ENCODE measurements at regions of chr3 and their contacts with region 1.

Region 1: DNA sequence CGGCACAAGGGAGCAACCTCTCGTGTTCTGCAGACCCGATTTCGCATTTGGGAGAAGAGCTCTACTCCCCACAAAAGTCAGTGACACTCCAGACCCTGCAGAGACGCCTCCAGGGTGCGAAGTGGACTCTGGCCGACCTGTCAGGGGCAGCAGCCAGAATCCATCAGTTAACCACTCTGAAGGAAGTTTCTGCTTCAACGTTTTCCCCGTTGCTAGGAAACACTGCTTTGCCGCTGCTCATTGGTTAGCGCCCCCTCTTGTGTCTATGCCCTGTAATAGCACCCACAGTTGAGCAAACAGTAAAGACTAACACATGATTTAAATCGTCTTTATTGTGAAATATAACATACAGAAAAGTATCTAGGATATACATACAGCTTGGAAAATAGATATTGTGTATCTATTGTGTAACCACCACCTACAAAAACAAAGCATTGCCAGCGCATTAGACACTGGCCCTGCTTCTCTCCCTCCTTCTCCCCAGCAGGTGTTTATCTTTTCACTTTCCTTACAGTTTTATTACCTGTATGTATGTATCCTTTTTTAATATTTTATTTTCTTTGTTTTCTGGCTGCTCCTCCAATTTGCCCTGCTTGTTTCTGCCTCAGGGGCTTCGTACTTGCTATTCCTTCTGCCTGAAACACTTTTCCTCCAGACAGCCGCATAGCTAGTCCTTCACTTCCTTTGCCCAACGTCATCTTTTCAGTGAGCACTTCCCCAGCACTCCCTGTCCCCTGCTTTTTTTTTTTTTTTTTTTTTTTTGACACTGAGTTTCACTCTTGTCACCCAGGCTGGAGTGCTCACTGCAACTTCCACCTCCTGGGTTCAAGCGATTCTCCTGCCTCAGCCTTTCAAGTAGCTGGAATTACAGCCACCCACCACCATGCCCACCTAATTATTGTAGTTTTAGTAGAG is 38.8 kb downstream of the TMEM40 start:
- H3K4me3 ChIP-seq: no peak overlapping the region
- H3K27ac ChIP-seq: no peak overlapping the region
- H3K4me1 ChIP-seq: no peaks in the 10 kb centered on the region
- CTCF ChIP-seq: peak; percentile 72

Region 2: DNA sequence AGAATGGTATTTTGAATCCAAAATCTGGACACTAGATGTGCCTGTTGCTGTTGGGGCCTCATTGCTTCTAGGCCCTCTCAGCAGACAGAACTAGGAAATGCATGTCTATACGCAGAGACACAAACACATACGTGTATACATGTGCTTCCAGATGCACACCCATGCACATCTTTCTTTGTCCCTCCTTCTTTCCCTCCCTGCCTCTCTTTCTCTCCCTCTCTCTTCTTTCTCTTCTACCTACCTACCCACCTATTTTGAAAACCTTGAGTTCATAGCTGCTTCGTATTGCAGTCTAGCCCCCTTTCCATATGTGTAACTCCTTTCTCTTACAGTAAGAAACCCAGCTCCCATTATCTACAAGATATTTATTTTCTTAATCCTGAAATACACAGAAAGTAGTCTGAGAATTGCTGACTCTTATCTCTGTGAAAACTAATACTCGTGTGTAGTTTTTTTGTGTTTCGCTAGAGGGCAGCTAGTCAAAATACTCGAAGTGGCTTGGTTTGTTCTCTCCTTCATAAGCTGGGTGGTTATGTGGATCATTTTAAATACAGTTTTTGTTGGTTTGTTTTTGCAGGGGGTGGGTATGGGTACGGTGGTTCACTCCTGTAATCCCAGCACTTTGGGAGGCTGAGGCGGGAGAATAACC is 102.6 kb after region 1 on chr3:
- CTCF ChIA-PET with region 1: interaction called, 5 read pairs
- POLR2A ChIA-PET with region 1: interaction called, 11 read pairs
- H3K4me3 ChIP-seq: no peak overlapping the region
- H3K27ac ChIP-seq: 0 out of 2 replicates have a peak overlapping the region, but pooled peaks have one; percentile 24
- H3K4me1 ChIP-seq: no peaks in the 10 kb centered on the region
- CTCF ChIP-seq: peak; percentile 18; the same call in 1 of the 2 replicates

Measured in HEK293 (cell line).